ENCODE measurements at regions of chr12 and their contacts with region 1.

Region 1: DNA sequence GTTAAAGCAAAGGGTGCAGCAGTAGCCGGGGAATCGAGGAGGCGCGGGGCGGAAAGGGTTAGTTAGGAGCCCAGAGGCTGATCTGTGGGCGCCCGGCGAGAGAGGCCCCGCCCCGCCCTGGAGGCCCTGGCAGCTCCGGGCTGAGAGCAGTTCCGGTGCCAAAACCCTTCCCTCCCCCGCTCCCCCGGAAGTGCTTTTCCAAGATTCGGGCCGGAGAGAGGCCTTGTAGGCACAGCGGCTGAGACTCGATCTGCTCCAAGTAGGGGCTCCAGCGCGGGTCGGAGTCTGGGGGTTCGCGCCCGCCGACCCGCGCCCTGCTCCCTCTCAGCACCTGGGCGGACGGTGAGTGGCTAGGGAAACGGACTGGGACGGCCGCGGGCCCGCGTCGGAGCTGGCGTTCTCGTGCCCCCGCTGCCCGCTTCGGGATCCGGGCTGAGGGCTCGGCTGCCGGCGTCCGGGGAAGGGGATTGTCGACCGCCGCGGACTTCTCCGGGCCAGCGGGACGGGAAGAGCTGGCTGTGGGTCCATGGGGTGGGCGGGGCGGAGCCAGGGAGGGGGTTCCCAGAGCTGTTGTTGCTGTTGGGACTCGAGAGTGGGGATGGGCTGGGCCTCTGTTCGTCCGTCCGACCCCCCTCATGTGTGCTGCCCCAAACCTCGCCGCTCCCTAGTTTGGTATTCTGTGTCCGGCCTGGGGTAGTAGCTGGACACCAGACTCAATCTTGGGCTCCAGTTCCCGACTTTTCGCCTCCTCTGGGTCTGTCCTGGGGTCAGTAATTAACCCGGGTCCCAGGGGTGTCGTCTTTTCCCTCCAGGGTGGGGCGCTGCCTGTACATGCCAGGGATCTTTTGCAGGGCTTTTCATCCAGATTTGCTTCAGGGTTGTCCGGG is at the start of gene FRS2:
- DNase-seq: peak; percentile 37 to 94
- H3K4me3 ChIP-seq: peak within 1 kb of the TSS; percentile 95 to 96
- H3K27ac ChIP-seq: peak within 1 kb of the TSS; percentile 95
- H3K4me1 ChIP-seq: peaks cover 4 to 13% of the 10 kb centered on the region in 2 donors
- H3K27me3 ChIP-seq: no peaks in the 10 kb centered on the region
- CTCF ChIP-seq: peak in 1 of 3 experiments; percentile 36
- total RNA-seq, gene FRS2: 37.7 TPM

Region 2: GRCh38 chr12:69239352-69239921 is 231.0 kb before region 1 on chr12 and contains the start of gene CPSF6:
- intact Hi-C with region 1: loop called (anchors 5 kb)
- DNase-seq: peak; percentile 71 to 96
- H3K4me3 ChIP-seq: peak within 1 kb of the TSS; percentile 92 to 93
- H3K27ac ChIP-seq: peak within 1 kb of the TSS; percentile 90 to 94
- H3K4me1 ChIP-seq: peaks cover 0 to 19% of the 10 kb centered on the region in 2 donors
- H3K27me3 ChIP-seq: no peaks in the 10 kb centered on the region
- CTCF ChIP-seq: no peak
- total RNA-seq, gene CPSF6: 29.2 TPM

Region 3: DNA sequence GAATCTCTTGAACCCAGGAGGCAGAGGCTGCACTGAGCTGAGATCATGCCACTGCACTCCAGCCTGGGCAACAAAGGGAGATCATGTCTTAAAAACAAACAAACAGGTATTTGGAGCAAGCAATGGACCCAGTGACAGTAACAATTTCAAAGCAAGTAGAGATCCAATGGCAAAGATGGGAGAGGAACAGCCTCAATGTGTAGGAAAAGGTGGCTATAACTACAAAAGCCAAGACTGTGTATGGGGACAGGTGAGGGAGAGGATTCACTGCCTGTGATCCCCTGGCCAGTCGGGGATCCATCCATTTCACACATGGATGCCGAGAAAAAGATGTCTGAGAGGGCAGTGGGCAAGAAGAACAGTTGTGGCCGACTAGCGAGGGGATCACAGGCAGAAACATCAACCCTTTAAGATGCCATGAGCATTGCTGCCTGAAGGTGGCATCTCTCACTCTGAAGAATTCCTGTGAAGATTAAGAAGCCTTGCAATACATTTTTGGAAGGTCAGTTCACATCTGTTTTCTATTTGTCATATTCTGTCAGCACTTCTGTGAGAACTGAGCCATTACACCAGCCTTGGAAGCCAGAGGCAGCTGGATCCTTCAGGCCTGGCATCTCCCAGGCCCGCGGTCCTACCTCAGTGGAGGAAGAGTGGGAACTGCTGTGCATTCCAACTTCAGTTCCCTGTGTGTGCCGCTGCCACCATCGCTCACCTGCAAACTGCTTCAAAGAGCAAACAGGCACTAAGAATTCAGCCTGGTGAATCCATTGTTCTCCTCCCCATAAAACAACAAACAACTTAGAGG is 54.8 kb before region 1 on chr12:
- intact Hi-C with region 1: loop called (anchors 2 kb)
- DNase-seq: peak in 1 of 2 donors; percentile 85
- H3K4me3 ChIP-seq: peak overlapping the region in 1 of 2 donors; percentile 34
- H3K27ac ChIP-seq: peak overlapping the region in 1 of 2 donors; percentile 2
- H3K4me1 ChIP-seq: peaks cover 0 to 7% of the 10 kb centered on the region in 2 donors
- H3K27me3 ChIP-seq: no peaks in the 10 kb centered on the region
- CTCF ChIP-seq: peak; percentile 52 to 68 (median 67)

Region 4: DNA sequence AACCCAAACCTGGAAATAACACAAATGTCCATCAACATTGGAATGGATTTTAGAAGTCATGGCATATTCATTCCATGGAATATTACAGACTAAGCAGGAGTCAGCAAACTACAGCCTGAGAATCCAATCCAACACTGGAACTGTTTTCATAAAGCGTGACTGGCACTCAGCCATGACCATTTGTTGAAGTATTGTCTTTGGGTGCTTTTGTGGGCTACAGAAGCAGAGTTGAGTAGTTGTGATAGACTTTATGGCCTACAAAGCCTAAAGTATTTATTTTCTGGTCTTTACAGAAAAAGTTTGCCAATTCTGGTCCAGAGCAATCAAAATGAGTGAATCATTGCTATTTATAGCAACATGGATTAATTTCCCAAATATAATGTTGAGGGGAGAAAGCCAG is 34.8 kb before region 1 on chr12:
- intact Hi-C with region 1: loop called (anchors 5 kb)
- DNase-seq: no peak
- H3K4me3 ChIP-seq: no peak overlapping the region
- H3K27ac ChIP-seq: peak overlapping the region; percentile 75 to 82
- H3K4me1 ChIP-seq: peaks cover 6 to 28% of the 10 kb centered on the region in 2 donors
- H3K27me3 ChIP-seq: no peaks in the 10 kb centered on the region
- CTCF ChIP-seq: no peak

Region 5: GRCh38 chr12:69497308-69498026 is 27.0 kb after region 1 on chr12:
- intact Hi-C with region 1: no loop called
- DNase-seq: no peak
- H3K4me3 ChIP-seq: no peak overlapping the region
- H3K27ac ChIP-seq: no peak overlapping the region
- H3K4me1 ChIP-seq: peaks cover 0 to 14% of the 10 kb centered on the region in 2 donors
- H3K27me3 ChIP-seq: no peaks in the 10 kb centered on the region
- CTCF ChIP-seq: no peak

Region 6: GRCh38 chr12:69511469-69512267 is 41.2 kb after region 1 on chr12:
- intact Hi-C with region 1: loop called (anchors 5 kb)
- DNase-seq: no peak
- H3K4me3 ChIP-seq: no peak overlapping the region
- H3K27ac ChIP-seq: no peak overlapping the region
- H3K4me1 ChIP-seq: peaks cover 0 to 25% of the 10 kb centered on the region in 2 donors
- H3K27me3 ChIP-seq: no peaks in the 10 kb centered on the region
- CTCF ChIP-seq: no peak

Region 7: GRCh38 chr12:69534389-69534822 is 64.0 kb after region 1 on chr12:
- intact Hi-C with region 1: loop called (anchors 2 kb)
- DNase-seq: peak; percentile 25 to 89
- H3K4me3 ChIP-seq: peak overlapping the region in 1 of 2 donors; percentile 29
- H3K27ac ChIP-seq: peak overlapping the region; percentile 47 to 69
- H3K4me1 ChIP-seq: peaks cover 0 to 6% of the 10 kb centered on the region in 2 donors
- H3K27me3 ChIP-seq: no peaks in the 10 kb centered on the region
- CTCF ChIP-seq: no peak

Region 8: GRCh38 chr12:69570545-69571399 is 100.3 kb after region 1 on chr12:
- intact Hi-C with region 1: loop called (anchors 2 kb)
- DNase-seq: peak in 1 of 2 donors; percentile 73
- H3K4me3 ChIP-seq: no peak overlapping the region
- H3K27ac ChIP-seq: no peak overlapping the region
- H3K4me1 ChIP-seq: no peaks in the 10 kb centered on the region
- H3K27me3 ChIP-seq: no peaks in the 10 kb centered on the region
- CTCF ChIP-seq: peak; percentile 59 to 79 (median 76)

Region 9: DNA sequence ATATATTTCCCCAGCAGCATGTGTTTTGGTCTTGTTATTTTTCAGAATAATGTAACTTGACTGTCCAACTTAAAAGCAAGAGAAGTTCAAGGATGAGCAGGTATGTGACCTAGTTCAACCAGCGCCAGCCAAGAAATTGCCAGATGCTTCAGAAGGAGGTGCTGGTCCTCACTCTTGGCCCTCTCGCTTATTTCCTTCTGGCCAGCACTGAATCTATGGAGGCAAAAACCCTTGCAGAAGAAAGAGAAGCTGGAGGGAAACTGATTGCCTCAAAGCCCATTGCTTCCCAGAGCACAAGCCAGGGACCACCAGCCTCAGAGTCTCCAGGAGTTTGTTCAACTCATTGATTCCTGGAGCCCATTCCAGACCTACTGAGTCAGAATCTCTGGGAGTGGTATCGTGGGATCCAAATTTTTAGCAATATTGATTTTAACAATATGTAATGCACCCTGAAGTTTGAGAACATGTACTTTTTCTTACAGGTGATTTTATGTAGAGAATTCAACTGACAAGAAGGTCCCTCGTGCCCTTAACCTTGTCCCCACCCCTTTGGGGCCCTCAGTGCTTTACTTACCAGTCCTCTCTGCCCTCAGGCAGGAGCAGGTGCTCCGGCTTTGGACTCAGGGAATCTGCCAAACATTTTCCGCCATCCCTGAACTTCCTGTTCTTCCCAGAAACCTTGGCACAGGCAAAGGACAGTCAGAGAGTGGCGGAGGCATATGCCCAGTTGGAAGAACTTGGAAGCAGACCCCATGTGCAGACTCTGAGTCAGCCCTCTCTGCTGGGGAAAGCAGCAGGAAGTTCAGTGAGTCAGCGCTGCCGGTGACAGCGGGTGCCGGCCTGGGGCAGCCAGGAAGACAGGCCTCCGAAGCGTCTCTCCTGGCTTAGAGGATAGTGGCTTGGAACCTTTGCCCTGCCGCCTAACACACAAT is 218.3 kb after region 1 on chr12:
- intact Hi-C with region 1: no loop called
- DNase-seq: peak; percentile 59 to 86
- H3K4me3 ChIP-seq: peak overlapping the region in 1 of 2 donors; percentile 21
- H3K27ac ChIP-seq: peak overlapping the region; percentile 41 to 72
- H3K4me1 ChIP-seq: peaks cover 4 to 10% of the 10 kb centered on the region in 2 donors
- H3K27me3 ChIP-seq: no peaks in the 10 kb centered on the region
- CTCF ChIP-seq: no peak